Activated naive CD8-positive, alpha-beta T cell treated with anti-CD3 and anti-CD28 coated beads, Interleukin-2, amount 10 ng/mL, durations not matched to agents 7 days and 5 days (primary cell): ENCODE measurements at regions of chr10 and their contacts with region 1.

Region 1: DNA sequence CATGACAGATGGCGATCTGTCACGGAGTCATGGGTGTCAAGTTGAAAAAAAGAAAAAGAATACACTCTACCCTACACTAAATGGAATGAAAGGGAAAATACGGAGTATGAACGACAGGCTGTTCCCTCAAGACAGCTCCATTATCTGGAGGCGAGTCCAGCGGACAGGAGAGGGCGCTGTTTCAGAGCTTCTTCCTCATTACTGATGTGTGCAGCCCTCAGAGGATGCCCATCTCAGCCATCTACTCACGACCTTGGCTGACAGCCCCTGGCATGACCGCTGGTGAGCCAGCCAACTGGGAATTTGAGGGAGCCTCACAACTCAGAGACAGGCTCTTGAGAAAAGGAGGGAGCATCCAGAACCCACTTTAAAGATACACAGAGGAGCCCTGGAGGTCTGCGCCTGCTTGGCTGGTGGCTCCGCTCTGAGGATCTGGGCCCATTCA is 49.6 kb upstream of the SMNDC1 start:
- DNase-seq: peak; percentile 77
- ATAC-seq: peak; percentile 82
- H3K4me3 Mint-ChIP-seq: peak overlapping the region; percentile 44
- H3K27ac Mint-ChIP-seq: no peak overlapping the region
- H3K4me1 Mint-ChIP-seq: peaks cover 36% of the 10 kb centered on the region
- H3K27me3 Mint-ChIP-seq: peaks cover 12% of the 10 kb centered on the region

Region 2: GRCh38 chr10:110336111-110336721 is 18.1 kb before region 1 on chr10:
- POLR2A ChIA-PET with region 1: interaction called, 10 read pairs
- DNase-seq: no peak
- ATAC-seq: no peak
- H3K4me3 Mint-ChIP-seq: peak overlapping the region; percentile 74
- H3K27ac Mint-ChIP-seq: peak overlapping the region; percentile 82
- H3K4me1 Mint-ChIP-seq: peaks cover 35% of the 10 kb centered on the region
- H3K27me3 Mint-ChIP-seq: peaks cover 2% of the 10 kb centered on the region

Region 3: GRCh38 chr10:110395725-110396651 is 41.6 kb after region 1 on chr10:
- POLR2A ChIA-PET with region 1: no interaction called
- DNase-seq: no peak
- ATAC-seq: no peak
- H3K4me3 Mint-ChIP-seq: no peak overlapping the region
- H3K27ac Mint-ChIP-seq: no peak overlapping the region
- H3K4me1 Mint-ChIP-seq: peaks cover 5% of the 10 kb centered on the region
- H3K27me3 Mint-ChIP-seq: peaks cover 3% of the 10 kb centered on the region

Region 4: GRCh38 chr10:110497438-110498086 is 143.2 kb after region 1 on chr10 and contains the start of gene DUSP5:
- POLR2A ChIA-PET with region 1: interaction called, 14 read pairs
- DNase-seq: peak; percentile 99
- ATAC-seq: peak; percentile 71
- H3K4me3 Mint-ChIP-seq: peak within 1 kb of the TSS; percentile 91
- H3K27ac Mint-ChIP-seq: peak within 1 kb of the TSS; percentile 86
- H3K4me1 Mint-ChIP-seq: peaks cover 38% of the 10 kb centered on the region
- H3K27me3 Mint-ChIP-seq: no peaks in the 10 kb centered on the region
- total RNA-seq, gene DUSP5: 23.1 to 24.3 TPM